GM10248 (cell line): ENCODE measurements at regions of chr1 and their contacts with region 1.

Region 1: GRCh38 chr1:40266786-40267535 is 8.9 kb downstream of the ZMPSTE24 start:
- DNase-seq: no peak
- CTCF ChIP-seq: no peak

Region 2: GRCh38 chr1:40299366-40300248 is 32.6 kb after region 1 on chr1:
- CTCF ChIA-PET with region 1: no interaction called
- POLR2A ChIA-PET with region 1: interaction called, 11 read pairs
- DNase-seq: no peak
- CTCF ChIP-seq: no peak